ENCODE measurements at regions of chr12 and their contacts with region 1.

Region 1: GRCh38 chr12:53414756-53415417 is 8.8 kb upstream of the AMHR2 start:
- DNase-seq: no peak
- H3K4me3 ChIP-seq: no peak overlapping the region
- H3K27ac ChIP-seq: peak overlapping the region; percentile 26 to 72 (median 42)
- H3K4me1 ChIP-seq: peaks cover 3 to 55% (median 10%) of the 10 kb centered on the region in 4 donors
- H3K27me3 ChIP-seq: no peaks in the 10 kb centered on the region
- CTCF ChIP-seq: no peak
- EP300 ChIP-seq: no peak
- POLR2A ChIP-seq: no peak

Region 2: DNA sequence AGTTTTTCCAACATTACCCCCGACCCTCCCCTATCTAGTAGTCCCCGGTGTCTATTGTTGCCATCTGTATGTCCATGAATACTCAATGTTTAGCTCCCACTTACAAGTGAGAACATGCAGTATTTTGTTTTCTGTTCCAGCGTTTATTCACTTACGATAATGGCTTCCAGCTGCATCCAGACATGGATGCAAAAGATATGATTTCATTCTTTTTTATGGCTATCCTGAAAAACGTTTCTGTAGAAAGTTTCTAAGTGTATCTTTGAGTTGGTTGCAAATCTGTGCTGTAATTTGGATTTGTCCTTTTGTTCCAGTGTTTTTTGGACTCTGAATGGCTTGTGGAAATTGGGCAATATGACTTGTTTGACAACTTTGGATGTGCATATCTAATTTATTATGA is 23.2 kb before region 1 on chr12:
- in situ Hi-C with region 1: no loop called
- intact Hi-C with region 1: loop called (anchors 2 kb)
- DNase-seq: no peak
- H3K4me3 ChIP-seq: no peak overlapping the region
- H3K27ac ChIP-seq: peak overlapping the region; percentile 78 to 84 (median 80)
- H3K4me1 ChIP-seq: peaks cover 26 to 60% (median 45%) of the 10 kb centered on the region in 4 donors
- H3K27me3 ChIP-seq: no peaks in the 10 kb centered on the region
- CTCF ChIP-seq: no peak
- EP300 ChIP-seq: no peak
- POLR2A ChIP-seq: no peak

Region 3: GRCh38 chr12:53530920-53531319 is 116.0 kb after region 1 on chr12:
- in situ Hi-C with region 1: no loop called
- intact Hi-C with region 1: no loop called
- DNase-seq: no peak
- H3K4me3 ChIP-seq: no peak overlapping the region
- H3K27ac ChIP-seq: no peak overlapping the region
- H3K4me1 ChIP-seq: no peaks in the 10 kb centered on the region
- H3K27me3 ChIP-seq: no peaks in the 10 kb centered on the region
- CTCF ChIP-seq: no peak
- EP300 ChIP-seq: no peak
- POLR2A ChIP-seq: no peak

Region 4: GRCh38 chr12:53869500-53869899 is 454.6 kb after region 1 on chr12:
- in situ Hi-C with region 1: no loop called
- intact Hi-C with region 1: no loop called
- DNase-seq: no peak
- H3K4me3 ChIP-seq: no peak overlapping the region
- H3K27ac ChIP-seq: no peak overlapping the region
- H3K4me1 ChIP-seq: no peaks in the 10 kb centered on the region
- H3K27me3 ChIP-seq: peaks cover 50% of the 10 kb centered on the region
- CTCF ChIP-seq: no peak
- EP300 ChIP-seq: no peak
- POLR2A ChIP-seq: no peak